ENCODE measurements at regions of chr14 and their contacts with region 1.

Region 1: DNA sequence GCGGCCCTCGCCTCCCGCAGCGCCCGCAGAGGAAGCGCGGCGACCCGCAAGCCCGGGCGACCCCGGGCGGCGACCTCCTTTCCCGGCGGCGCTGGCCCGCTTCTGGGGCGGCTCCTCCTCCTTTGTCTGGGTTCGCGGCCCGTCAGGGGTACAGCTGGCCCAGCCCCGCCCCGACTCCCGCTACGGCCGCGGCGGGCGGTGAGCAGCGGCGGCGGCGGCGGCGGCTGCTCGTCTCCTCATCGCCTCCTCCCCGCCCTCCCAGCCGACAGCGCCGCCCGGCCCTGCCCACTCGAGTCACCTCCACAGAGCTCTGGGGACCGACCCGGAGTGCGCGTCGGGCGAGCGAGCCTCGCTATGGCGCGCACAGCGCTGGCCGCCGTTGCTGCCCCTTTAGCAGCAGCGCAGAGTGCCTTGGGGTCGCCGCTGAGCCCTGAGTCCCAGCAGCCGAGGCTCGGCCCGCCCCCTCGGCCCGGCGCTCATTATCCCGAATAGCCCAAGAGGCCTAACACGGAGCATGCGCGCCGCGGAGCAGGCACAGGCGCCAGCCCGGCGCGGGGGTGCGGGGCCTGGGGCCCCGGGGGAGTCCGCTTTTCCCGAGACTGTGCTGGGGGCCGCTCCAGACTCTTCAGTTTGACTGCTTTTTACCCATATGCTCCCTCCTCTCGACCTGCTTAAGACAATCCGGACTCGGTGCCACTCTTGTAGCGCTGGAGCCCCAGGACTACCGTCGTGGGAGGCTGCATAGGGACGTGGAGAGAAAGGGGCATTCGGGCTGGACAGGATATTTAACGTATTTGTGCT is at the start of gene SOS2:
- DNase-seq: peak; percentile 87
- ATAC-seq: peak; percentile 87
- H3K4me3 Mint-ChIP-seq: peak within 1 kb of the TSS; percentile 93
- H3K27ac Mint-ChIP-seq: peak within 1 kb of the TSS; percentile 92
- H3K4me1 Mint-ChIP-seq: peaks cover 35% of the 10 kb centered on the region
- H3K27me3 Mint-ChIP-seq: no peaks in the 10 kb centered on the region
- CTCF ChIP-seq: no peak
- total RNA-seq, gene SOS2: 29.1 and 32.0 TPM in 2 replicates

Region 2: DNA sequence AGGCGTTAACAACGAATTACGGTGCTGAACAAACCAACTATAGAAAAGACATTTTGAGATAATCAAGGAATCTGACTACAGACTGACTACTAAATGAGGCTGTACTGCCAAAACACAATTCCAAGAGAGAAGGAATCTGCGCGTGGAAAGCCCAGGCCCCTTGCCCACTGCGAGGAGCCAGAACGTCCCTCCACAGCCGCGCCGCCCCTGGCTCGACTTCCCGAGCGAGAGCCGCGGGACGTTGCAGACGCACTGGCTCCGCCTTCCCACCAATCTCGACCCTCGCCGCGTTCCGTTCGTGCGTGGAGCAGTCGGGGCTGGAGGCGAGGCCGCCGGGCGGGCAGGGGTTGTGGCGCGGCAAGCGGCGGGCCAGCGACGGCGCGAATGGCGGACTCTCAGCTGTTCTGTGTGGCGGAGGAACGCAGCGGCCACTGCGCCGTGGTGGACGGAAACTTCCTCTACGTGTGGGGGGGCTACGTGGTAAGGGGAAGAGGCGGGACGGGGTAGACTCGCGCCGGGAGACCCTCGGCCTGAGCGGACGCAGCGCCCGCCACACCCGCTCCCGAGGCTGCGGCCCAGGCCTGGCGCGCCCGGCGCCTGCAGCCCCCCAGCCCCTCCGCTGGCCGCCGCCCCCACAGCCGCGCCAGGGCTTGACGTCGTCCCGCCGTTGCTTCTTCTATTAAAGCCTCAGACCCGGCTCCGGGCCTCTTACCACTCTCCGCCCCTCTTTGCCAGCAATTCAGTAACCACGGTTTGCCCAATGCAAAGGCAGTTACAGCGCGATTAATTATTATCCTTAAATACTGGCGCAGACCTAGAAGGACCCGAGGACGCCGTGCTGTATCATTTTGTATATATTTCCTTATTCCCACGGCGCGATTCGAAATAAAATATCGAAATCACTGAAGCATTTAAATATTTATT is 538.6 kb before region 1 on chr14 and contains the start of gene KLHDC1:
- CTCF ChIA-PET with region 1: no interaction called
- POLR2A ChIA-PET with region 1: no interaction called
- intact Hi-C with region 1: loop called (anchors 5 kb)
- DNase-seq: peak; percentile 74
- ATAC-seq: peak; percentile 80
- H3K4me3 Mint-ChIP-seq: peak within 1 kb of the TSS; percentile 83
- H3K27ac Mint-ChIP-seq: peak within 1 kb of the TSS; percentile 84
- H3K4me1 Mint-ChIP-seq: peaks cover 24% of the 10 kb centered on the region
- H3K27me3 Mint-ChIP-seq: no peaks in the 10 kb centered on the region
- CTCF ChIP-seq: no peak
- total RNA-seq, gene KLHDC1: 5.7 and 6.9 TPM in 2 replicates

Region 3: GRCh38 chr14:49880267-49881064 is 351.2 kb before region 1 on chr14:
- CTCF ChIA-PET with region 1: no interaction called
- POLR2A ChIA-PET with region 1: no interaction called
- intact Hi-C with region 1: no loop called
- DNase-seq: no peak
- ATAC-seq: peak; percentile 65
- H3K4me3 Mint-ChIP-seq: no peak overlapping the region
- H3K27ac Mint-ChIP-seq: peak overlapping the region; percentile 47
- H3K4me1 Mint-ChIP-seq: peaks cover 14% of the 10 kb centered on the region
- H3K27me3 Mint-ChIP-seq: no peaks in the 10 kb centered on the region
- CTCF ChIP-seq: no peak

Region 4: GRCh38 chr14:50128225-50128624 is 103.5 kb before region 1 on chr14:
- CTCF ChIA-PET with region 1: no interaction called
- POLR2A ChIA-PET with region 1: no interaction called
- intact Hi-C with region 1: no loop called
- DNase-seq: no peak
- ATAC-seq: no peak
- H3K4me3 Mint-ChIP-seq: no peak overlapping the region
- H3K27ac Mint-ChIP-seq: no peak overlapping the region
- H3K4me1 Mint-ChIP-seq: peaks cover under 1% of the 10 kb centered on the region
- H3K27me3 Mint-ChIP-seq: no peaks in the 10 kb centered on the region
- CTCF ChIP-seq: no peak

Region 5: GRCh38 chr14:50260511-50260910 is 28.8 kb after region 1 on chr14:
- CTCF ChIA-PET with region 1: no interaction called
- POLR2A ChIA-PET with region 1: interaction called, 4 read pairs
- intact Hi-C with region 1: loop called (anchors 1 kb)
- DNase-seq: no peak
- ATAC-seq: peak; percentile 76
- H3K4me3 Mint-ChIP-seq: no peak overlapping the region
- H3K27ac Mint-ChIP-seq: no peak overlapping the region
- H3K4me1 Mint-ChIP-seq: no peaks in the 10 kb centered on the region
- H3K27me3 Mint-ChIP-seq: no peaks in the 10 kb centered on the region
- CTCF ChIP-seq: no peak

Region 6: GRCh38 chr14:50469982-50470381 is 238.3 kb after region 1 on chr14:
- CTCF ChIA-PET with region 1: no interaction called
- POLR2A ChIA-PET with region 1: no interaction called
- intact Hi-C with region 1: no loop called
- DNase-seq: no peak
- ATAC-seq: no peak
- H3K4me3 Mint-ChIP-seq: no peak overlapping the region
- H3K27ac Mint-ChIP-seq: no peak overlapping the region
- H3K4me1 Mint-ChIP-seq: no peaks in the 10 kb centered on the region
- H3K27me3 Mint-ChIP-seq: no peaks in the 10 kb centered on the region
- CTCF ChIP-seq: no peak